GM10248 (cell line): ENCODE measurements at regions of chr12 and their contacts with region 1.

Region 1: DNA sequence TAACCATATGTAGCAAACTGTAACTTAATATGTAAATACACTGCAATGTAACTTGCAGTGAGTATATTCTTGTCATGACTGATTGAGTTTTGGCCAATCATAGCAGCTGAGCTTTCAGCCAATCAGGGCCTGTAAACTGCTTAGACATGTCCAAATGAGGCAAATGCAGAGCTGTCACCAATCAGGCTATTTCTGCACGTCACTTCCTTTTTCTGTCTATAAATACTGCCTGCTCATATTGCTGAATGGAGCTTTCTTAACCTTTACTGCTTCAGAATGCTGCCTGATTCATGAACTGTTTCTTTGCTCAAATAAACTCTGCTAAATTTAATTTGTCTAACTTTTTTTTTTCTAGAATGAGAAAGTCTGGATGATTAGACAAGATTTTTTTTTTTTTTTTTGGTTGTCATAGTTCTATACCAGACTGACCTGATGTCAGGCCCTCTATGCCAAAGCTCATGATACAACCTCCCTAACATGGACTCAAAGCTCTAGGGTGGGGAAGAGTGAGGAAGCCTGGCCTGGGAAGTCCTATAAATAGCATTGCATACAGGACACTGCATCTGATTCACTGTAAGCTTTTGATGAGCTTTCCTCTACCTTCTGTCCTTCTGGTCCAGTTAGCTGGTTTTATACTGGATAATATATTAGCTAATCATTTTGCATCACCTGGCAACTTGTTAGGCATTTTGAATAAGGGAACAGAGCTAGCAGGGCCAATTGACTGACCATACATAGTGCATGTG is 12.0 kb downstream of the MGP start:
- DNase-seq: no peak
- CTCF ChIP-seq: no peak

Region 2: GRCh38 chr12:14803011-14803829 is 70.4 kb before region 1 on chr12 and contains the starts of genes C12orf60 and WBP11:
- CTCF ChIA-PET with region 1: no interaction called
- POLR2A ChIA-PET with region 1: no interaction called
- DNase-seq: peak; percentile 92
- CTCF ChIP-seq: no peak

Region 3: DNA sequence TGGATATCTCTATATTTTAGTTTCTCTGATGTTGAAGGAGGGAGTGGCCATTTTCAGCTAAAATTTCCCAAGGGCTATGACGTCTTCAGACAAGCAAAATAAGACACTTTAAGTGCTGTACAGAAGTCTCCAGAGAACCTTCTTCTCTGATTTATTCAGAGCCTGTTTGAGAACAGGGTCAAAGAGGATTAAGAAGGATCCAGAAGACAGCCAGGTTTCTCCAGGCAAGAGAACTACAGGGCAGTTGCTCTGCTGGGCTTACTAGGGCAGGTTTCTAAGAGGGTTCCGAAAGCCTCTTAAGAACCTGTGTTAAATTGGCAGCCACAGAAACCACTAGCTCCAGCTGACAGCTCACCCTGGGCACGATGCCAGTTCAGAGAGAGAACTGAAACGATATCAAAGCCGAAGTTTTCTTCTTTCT is 10.9 kb after region 1 on chr12:
- CTCF ChIA-PET with region 1: interaction called, 13 read pairs
- POLR2A ChIA-PET with region 1: no interaction called
- DNase-seq: peak; percentile 18
- CTCF ChIP-seq: no peak